ENCODE measurements at regions of chr7 and their contacts with region 1.

Region 1: GRCh38 chr7:100015232-100016209 is at the start of gene ZKSCAN1:
- DNase-seq: peak; percentile 94 to 97 (median 97)
- H3K4me3 ChIP-seq: peak within 1 kb of the TSS; percentile 68 to 97 (median 93)
- H3K27ac ChIP-seq: peak within 1 kb of the TSS; percentile 98 to 99
- H3K4me1 ChIP-seq: peaks cover 4 to 42% (median 20%) of the 10 kb centered on the region in 4 experiments
- H3K27me3 ChIP-seq: no peaks in the 10 kb centered on the region

Region 2: DNA sequence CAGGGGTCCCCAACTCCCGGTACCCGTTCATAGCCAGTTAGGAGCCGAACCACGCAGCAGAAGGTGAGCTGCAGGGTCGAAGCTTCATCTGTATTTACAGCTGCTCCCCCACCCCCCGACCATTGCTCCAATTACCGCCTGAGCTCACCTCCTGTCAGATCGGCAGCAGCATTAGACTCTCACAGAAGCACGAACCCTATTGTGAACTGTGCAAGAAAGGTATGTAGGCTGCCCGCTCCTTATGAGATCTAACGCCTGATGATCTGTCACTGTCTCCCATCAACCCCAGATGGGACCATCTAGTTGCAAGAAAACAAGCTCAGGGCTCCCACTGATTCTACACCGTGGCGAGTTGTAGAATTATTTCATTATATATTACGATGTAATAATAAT is 25.1 kb before region 1 on chr7:
- CTCF ChIA-PET with region 1: interaction called, 46 read pairs
- POLR2A ChIA-PET with region 1: interaction called, 4 read pairs
- DNase-seq: no peak
- H3K4me3 ChIP-seq: peak overlapping the region in 1 of 7 experiments; percentile 11
- H3K27ac ChIP-seq: no peak overlapping the region
- H3K4me1 ChIP-seq: peaks cover 0 to 14% (median 3%) of the 10 kb centered on the region in 4 experiments
- H3K27me3 ChIP-seq: peaks cover 0 to 2% (median 0%) of the 10 kb centered on the region in 5 experiments

Region 3: DNA sequence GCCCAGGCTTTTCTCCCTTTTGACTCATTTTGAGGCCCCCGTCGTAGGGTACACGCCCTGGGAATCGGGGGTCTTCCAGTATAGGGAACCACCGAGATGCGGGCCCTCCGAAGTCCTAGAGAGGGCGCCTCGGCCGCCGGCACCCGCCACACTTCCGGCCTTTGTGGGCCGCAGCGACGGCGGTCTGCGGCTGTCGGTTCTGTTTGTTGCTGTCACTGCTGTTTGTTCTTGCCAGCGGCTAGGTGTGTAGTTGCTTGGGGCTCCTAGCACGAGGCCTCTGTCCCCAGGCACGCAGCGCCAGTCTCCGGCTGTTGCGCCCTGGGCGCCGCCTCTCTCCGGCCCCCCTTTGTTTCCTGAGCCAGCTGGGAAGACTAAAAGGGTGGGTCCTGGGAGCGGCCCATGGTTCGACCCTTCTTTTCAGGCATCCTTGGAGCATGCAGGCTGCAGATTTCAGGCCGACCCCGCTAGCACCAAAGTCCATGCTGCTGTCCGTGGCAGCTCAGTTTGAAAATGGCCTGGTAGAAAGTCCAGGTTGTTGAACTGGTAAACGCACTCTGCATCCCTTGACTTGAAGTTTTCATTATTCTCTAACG is 17.9 kb before region 1 on chr7:
- CTCF ChIA-PET with region 1: interaction called, 46 read pairs
- POLR2A ChIA-PET with region 1: interaction called, 14 read pairs
- DNase-seq: peak; percentile 82 to 93 (median 92)
- H3K4me3 ChIP-seq: peak overlapping the region; percentile 39 to 80 (median 66)
- H3K27ac ChIP-seq: peak overlapping the region; percentile 68 to 82
- H3K4me1 ChIP-seq: peaks cover 0 to 27% (median 13%) of the 10 kb centered on the region in 4 experiments
- H3K27me3 ChIP-seq: no peaks in the 10 kb centered on the region

Region 4: GRCh38 chr7:100003711-100004661 is 11.5 kb before region 1 on chr7:
- CTCF ChIA-PET with region 1: interaction called, 8 read pairs
- POLR2A ChIA-PET with region 1: interaction called, 14 read pairs
- DNase-seq: peak in 2 of 3 donors; percentile 65 to 78
- H3K4me3 ChIP-seq: peak overlapping the region in 3 of 7 experiments; percentile 17 to 38 (median 29)
- H3K27ac ChIP-seq: peak overlapping the region; percentile 59 to 78
- H3K4me1 ChIP-seq: peaks cover 3 to 24% (median 18%) of the 10 kb centered on the region in 4 experiments
- H3K27me3 ChIP-seq: no peaks in the 10 kb centered on the region